IMR-90 (cell line): ENCODE measurements at regions of chr3 and their contacts with region 1.

Region 1: GRCh38 chr3:185021256-185021655 is 131.6 kb downstream of the C3orf70 start:
- DNase-seq: peak; percentile 13
- ATAC-seq: no peak
- H3K4me3 ChIP-seq: no peak overlapping the region
- H3K27ac ChIP-seq: no peak overlapping the region
- H3K4me1 ChIP-seq: no peaks in the 10 kb centered on the region
- H3K27me3 ChIP-seq: no peaks in the 10 kb centered on the region
- CTCF ChIP-seq: no peak
- POLR2A ChIP-seq: no peak
- RAD21 ChIP-seq: no peak

Region 2: GRCh38 chr3:184954251-184954650 is 67.0 kb before region 1 on chr3:
- CTCF ChIA-PET with region 1: no interaction called
- POLR2A ChIA-PET with region 1: no interaction called
- dilution Hi-C with region 1: no loop called
- in situ Hi-C with region 1: no loop called
- intact Hi-C with region 1: loop called (anchors 2 kb)
- DNase-seq: no peak
- ATAC-seq: no peak
- H3K4me3 ChIP-seq: no peak overlapping the region
- H3K27ac ChIP-seq: no peak overlapping the region
- H3K4me1 ChIP-seq: no peaks in the 10 kb centered on the region
- H3K27me3 ChIP-seq: no peaks in the 10 kb centered on the region
- CTCF ChIP-seq: no peak
- POLR2A ChIP-seq: no peak
- RAD21 ChIP-seq: no peak